ENCODE measurements at regions of chr5 and their contacts with region 1.

Region 1: GRCh38 chr5:73792687-73793320 is 166.8 kb downstream of the ARHGEF28 start:
- DNase-seq: peak; percentile 48 to 71 (median 62)
- ATAC-seq: peak in 3 of 4 donors; percentile 78 to 89 (median 79)
- H3K4me3 ChIP-seq: no peak overlapping the region
- H3K27ac ChIP-seq: no peak overlapping the region
- H3K4me1 ChIP-seq: peaks cover 0 to 28% (median 11%) of the 10 kb centered on the region in 12 donors
- H3K27me3 ChIP-seq: no peaks in the 10 kb centered on the region
- CTCF ChIP-seq: peak; percentile 91 to 100 (median 97)
- POLR2A ChIP-seq: no peak

Region 2: GRCh38 chr5:74648835-74649293 is 856.1 kb after region 1 on chr5:
- intact Hi-C with region 1: loop called in 8 of 10 experiments (anchors 5 to 10 kb)
- DNase-seq: peak in 1 of 5 donors; percentile 35
- ATAC-seq: peak; percentile 67 to 95 (median 88)
- H3K4me3 ChIP-seq: peak overlapping the region in 2 of 12 donors; percentile 10 to 12
- H3K27ac ChIP-seq: no peak overlapping the region
- H3K4me1 ChIP-seq: peaks cover 0 to 16% (median 5%) of the 10 kb centered on the region in 12 donors
- H3K27me3 ChIP-seq: no peaks in the 10 kb centered on the region
- CTCF ChIP-seq: peak; percentile 58 to 84 (median 78)
- POLR2A ChIP-seq: no peak

Region 3: GRCh38 chr5:74657165-74657564 is 864.4 kb after region 1 on chr5:
- intact Hi-C with region 1: loop called in 1 of 10 experiments (anchors 5 kb)
- DNase-seq: no peak
- ATAC-seq: peak in 3 of 4 donors; percentile 64 to 91 (median 77)
- H3K4me3 ChIP-seq: no peak overlapping the region
- H3K27ac ChIP-seq: peak overlapping the region in 3 of 12 donors; percentile 4 to 13 (median 6)
- H3K4me1 ChIP-seq: peaks cover 0 to 10% (median 0%) of the 10 kb centered on the region in 12 donors
- H3K27me3 ChIP-seq: no peaks in the 10 kb centered on the region
- CTCF ChIP-seq: no peak
- POLR2A ChIP-seq: no peak

Measured in heart left ventricle (tissue), 16 donors.